Activated T-helper 2 cell treated with anti-CD3 and anti-CD28 coated beads, Interferon-gamma antibody, Interleukin-2, Interleukin-4, amounts not matched to agents 10 μg/mL and 5 μg/mL and 100 μg/mL, durations not matched to agents 14 hours and 24 hours and 36 hours (primary cell): ENCODE measurements at regions of chr14 and their contacts with region 1.

Region 1: DNA sequence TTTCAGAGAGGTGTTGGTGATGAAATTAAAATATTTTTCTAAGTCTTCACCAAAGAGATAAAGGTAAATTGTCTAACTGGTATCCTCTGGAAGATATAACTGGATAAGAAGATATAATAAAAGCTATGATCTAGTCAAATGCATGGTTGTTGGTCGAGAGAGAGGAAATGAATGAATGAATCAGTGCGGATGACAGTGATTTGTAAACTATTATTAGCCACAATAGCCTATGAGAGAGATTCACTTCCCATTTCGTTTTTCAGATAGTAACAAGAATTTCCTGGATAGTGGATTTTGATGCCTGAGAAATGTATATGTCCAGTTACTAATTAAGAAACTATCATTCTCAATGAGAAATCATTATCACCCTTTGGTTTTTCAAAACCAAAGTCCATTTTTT is 63.1 kb downstream of the HEATR5A start:
- DNase-seq: no peak
- H3K4me3 Mint-ChIP-seq: no peak overlapping the region
- H3K27ac Mint-ChIP-seq: no peak overlapping the region
- H3K4me1 Mint-ChIP-seq: peaks cover 2% of the 10 kb centered on the region
- H3K27me3 Mint-ChIP-seq: no peaks in the 10 kb centered on the region

Region 2: DNA sequence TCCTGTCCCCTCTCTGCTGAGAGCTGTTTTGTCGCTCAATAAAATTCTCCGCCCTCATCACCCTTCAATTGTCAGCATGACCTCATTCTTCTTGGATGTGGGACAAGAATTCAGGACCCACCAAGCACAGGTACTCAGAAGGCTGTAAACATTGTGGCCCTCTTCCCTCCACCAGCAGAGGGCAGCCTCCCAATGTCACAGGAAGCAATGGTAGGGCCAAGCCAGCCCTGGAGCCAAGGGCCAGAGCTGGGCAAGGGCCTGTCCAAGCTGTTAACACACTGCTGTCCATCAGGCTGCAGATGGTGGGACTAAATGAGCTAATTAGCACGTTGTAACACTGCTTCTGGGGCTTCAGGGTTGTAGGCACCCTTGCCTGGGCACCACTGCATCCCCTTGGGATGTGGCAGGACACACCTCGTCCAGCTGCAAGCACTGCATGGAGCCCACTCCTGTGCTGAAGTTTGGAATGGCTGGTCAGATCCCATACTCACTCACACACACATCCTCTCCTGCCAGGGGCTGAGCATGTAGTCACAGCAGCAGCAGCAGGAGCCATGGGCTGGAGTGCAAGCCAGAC is 87.0 kb before region 1 on chr14:
- intact Hi-C with region 1: loop called (anchors 5 kb)
- DNase-seq: no peak
- H3K4me3 Mint-ChIP-seq: no peak overlapping the region
- H3K27ac Mint-ChIP-seq: no peak overlapping the region
- H3K4me1 Mint-ChIP-seq: peaks cover 5% of the 10 kb centered on the region
- H3K27me3 Mint-ChIP-seq: no peaks in the 10 kb centered on the region

Region 3: GRCh38 chr14:31420319-31421111 is 63.2 kb after region 1 on chr14 and contains the start of gene HEATR5A:
- intact Hi-C with region 1: no loop called
- DNase-seq: peak; percentile 90
- H3K4me3 Mint-ChIP-seq: peak within 1 kb of the TSS; percentile 95
- H3K27ac Mint-ChIP-seq: peak within 1 kb of the TSS; percentile 90
- H3K4me1 Mint-ChIP-seq: peaks cover 24% of the 10 kb centered on the region
- H3K27me3 Mint-ChIP-seq: no peaks in the 10 kb centered on the region
- total RNA-seq, gene HEATR5A: 23.1 TPM in 2 replicates